ENCODE measurements at regions of chr3 and their contacts with region 1.

Region 1: DNA sequence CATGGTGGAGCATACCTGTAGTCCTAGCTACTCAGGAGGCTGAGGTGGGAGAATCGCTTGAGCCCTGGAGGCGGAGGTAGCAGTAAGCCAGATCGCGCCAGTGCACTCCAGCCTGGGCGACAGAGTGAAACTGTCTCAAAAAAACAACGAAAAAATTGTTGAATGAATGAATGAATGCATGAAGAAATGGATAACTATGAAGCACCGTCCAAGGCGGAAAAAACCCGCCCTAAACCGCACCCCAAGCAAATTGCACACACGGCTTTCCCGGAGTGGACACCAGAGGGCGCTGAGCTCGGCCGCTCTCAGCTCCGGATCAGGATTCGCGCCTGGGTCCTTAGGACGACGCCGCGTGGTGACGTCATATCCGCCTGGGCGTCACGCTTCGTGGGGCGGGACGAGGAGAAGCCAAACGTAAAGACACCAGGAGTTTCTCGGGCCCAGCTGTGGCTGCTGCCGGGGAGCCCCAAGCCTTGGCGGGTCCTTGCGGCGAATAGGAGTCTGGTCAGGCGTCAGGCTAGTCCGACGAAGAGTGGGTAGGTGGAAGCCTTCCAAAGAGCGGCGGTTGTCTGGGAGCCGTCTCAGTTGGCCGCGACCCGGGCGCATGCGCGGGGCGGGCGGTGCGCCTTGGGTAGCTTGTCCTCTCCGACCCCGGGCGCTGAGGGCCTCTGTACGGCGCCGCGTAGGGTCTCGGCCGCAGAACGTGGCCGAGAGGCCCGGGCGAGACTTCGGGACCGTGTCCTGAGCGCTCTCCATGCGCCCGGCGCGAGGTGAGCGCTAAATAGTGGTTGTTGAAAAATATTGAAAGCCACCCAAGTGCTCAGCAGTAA is at the starts of genes HTD2 and RPP14:
- DNase-seq: peak; percentile 64 to 96
- ATAC-seq: peak; percentile 94 to 96
- H3K4me3 ChIP-seq: peak within 1 kb of the TSS; percentile 96
- H3K27ac ChIP-seq: peak within 1 kb of the TSS; percentile 87 to 97
- H3K4me1 ChIP-seq: peaks cover 16% of the 10 kb centered on the region
- CTCF ChIP-seq: peak; percentile 71
- EP300 ChIP-seq: no peak
- POLR2A ChIP-seq: peak; percentile 57
- RAD21 ChIP-seq: peak; percentile 14 to 26; a peak in 3 of 5 replicates
- polyA plus RNA-seq, gene HTD2: 7.8 and 8.4 TPM in 2 replicates
- polyA plus RNA-seq, gene RPP14: 14.1 and 21.5 TPM in 2 replicates

Region 2: DNA sequence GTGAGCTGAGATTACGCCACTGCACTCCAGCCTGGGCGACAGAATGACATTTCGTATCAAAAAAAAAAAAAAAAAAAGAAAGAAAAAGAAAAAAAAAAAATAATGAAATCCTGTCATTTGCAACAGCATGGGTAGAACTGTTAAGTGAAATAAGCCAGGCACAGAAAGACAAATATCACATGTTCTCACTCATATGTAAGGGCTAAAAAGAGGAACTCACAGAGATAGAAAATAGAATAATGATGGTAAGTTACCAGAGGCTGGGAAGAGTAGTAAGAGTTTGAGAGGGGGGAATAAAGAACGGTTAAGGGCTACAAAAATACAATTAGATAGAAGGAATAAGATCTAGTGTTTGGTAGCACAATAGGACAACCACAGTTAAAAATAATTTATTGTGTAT is 632.9 kb before region 1 on chr3:
- CTCF ChIA-PET with region 1: no interaction called
- POLR2A ChIA-PET with region 1: no interaction called
- DNase-seq: no peak
- ATAC-seq: no peak
- H3K4me3 ChIP-seq: no peak overlapping the region
- H3K27ac ChIP-seq: no peak overlapping the region
- H3K4me1 ChIP-seq: no peaks in the 10 kb centered on the region
- CTCF ChIP-seq: no peak
- EP300 ChIP-seq: no peak
- POLR2A ChIP-seq: no peak
- RAD21 ChIP-seq: no peak

Region 3: DNA sequence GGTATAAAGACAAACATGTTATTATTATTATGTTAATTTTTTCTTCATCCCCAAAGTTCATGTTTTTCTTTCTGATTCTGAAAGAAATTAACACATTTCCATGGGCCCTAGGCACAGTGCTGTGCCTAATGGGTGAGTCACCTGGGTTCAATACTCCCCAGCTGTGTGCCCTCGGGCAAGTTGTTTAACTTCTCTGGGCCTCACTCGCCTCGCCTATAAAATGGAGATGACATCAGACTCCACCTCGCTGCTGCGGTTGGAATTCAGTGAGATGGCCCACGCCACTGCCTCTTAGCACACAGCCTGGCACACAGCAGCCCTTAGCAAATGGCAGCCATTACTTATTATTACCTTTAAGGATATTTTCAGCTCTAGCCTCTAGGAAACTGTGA is 117.9 kb before region 1 on chr3:
- CTCF ChIA-PET with region 1: interaction called, 172 read pairs
- POLR2A ChIA-PET with region 1: interaction called, 3 read pairs
- DNase-seq: no peak
- ATAC-seq: no peak
- H3K4me3 ChIP-seq: no peak overlapping the region
- H3K27ac ChIP-seq: peak overlapping the region in 1 of 2 experiments; percentile 44; a peak in 1 of 6 replicates
- H3K4me1 ChIP-seq: peaks cover 12% of the 10 kb centered on the region
- CTCF ChIP-seq: no peak
- EP300 ChIP-seq: no peak
- POLR2A ChIP-seq: no peak
- RAD21 ChIP-seq: no peak

Region 4: GRCh38 chr3:58237238-58237940 is 68.7 kb before region 1 on chr3 and contains the start of gene ABHD6:
- CTCF ChIA-PET with region 1: interaction called, 13 read pairs
- POLR2A ChIA-PET with region 1: no interaction called
- DNase-seq: peak; percentile 58 to 61
- ATAC-seq: peak; percentile 84 to 92
- H3K4me3 ChIP-seq: peak within 1 kb of the TSS; percentile 91
- H3K27ac ChIP-seq: peak within 1 kb of the TSS; percentile 86 to 98
- H3K4me1 ChIP-seq: peaks cover 25% of the 10 kb centered on the region
- CTCF ChIP-seq: peak; percentile 37
- EP300 ChIP-seq: no peak
- POLR2A ChIP-seq: peak; percentile 24; the same call in 1 of the 2 replicates
- RAD21 ChIP-seq: peak; percentile 42 to 69
- polyA plus RNA-seq, gene ABHD6: 10.1 and 13.8 TPM in 2 replicates

Region 5: GRCh38 chr3:58414538-58415197 is 108.6 kb after region 1 on chr3:
- CTCF ChIA-PET with region 1: interaction called, 30 read pairs
- POLR2A ChIA-PET with region 1: no interaction called
- DNase-seq: peak; percentile 26 to 51
- ATAC-seq: peak; percentile 62 to 84; a peak in 4 of 6 replicates
- H3K4me3 ChIP-seq: no peak overlapping the region
- H3K27ac ChIP-seq: no peak overlapping the region
- H3K4me1 ChIP-seq: no peaks in the 10 kb centered on the region
- CTCF ChIP-seq: peak; percentile 63
- EP300 ChIP-seq: no peak
- POLR2A ChIP-seq: no peak
- RAD21 ChIP-seq: peak; percentile 42 to 62; a peak in 4 of 5 replicates